ENCODE measurements at regions of chr1 and their contacts with region 1.

Region 1: GRCh38 chr1:27662707-27663393 is 9.1 kb downstream of the IFI6 start:
- DNase-seq: no peak
- H3K4me3 ChIP-seq: no peak overlapping the region
- H3K27me3 ChIP-seq: no peaks in the 10 kb centered on the region
- CTCF ChIP-seq: peak; percentile 86

Region 2: GRCh38 chr1:27365372-27366112 is 297.3 kb before region 1 on chr1:
- CTCF ChIA-PET with region 1: interaction called, 13 read pairs
- POLR2A ChIA-PET with region 1: no interaction called
- DNase-seq: peak; percentile 65
- H3K4me3 ChIP-seq: peak overlapping the region; percentile 56
- H3K27me3 ChIP-seq: no peaks in the 10 kb centered on the region
- CTCF ChIP-seq: no peak

Region 3: GRCh38 chr1:27402349-27402754 is 260.5 kb before region 1 on chr1:
- CTCF ChIA-PET with region 1: interaction called, 10 read pairs
- POLR2A ChIA-PET with region 1: no interaction called
- DNase-seq: no peak
- H3K4me3 ChIP-seq: no peak overlapping the region
- H3K27me3 ChIP-seq: no peaks in the 10 kb centered on the region
- CTCF ChIP-seq: peak; percentile 79

Region 4: GRCh38 chr1:27436204-27437159 is 226.4 kb before region 1 on chr1:
- CTCF ChIA-PET with region 1: no interaction called
- POLR2A ChIA-PET with region 1: interaction called, 10 read pairs
- DNase-seq: peak; percentile 37
- H3K4me3 ChIP-seq: no peak overlapping the region
- H3K27me3 ChIP-seq: no peaks in the 10 kb centered on the region
- CTCF ChIP-seq: no peak

Region 5: DNA sequence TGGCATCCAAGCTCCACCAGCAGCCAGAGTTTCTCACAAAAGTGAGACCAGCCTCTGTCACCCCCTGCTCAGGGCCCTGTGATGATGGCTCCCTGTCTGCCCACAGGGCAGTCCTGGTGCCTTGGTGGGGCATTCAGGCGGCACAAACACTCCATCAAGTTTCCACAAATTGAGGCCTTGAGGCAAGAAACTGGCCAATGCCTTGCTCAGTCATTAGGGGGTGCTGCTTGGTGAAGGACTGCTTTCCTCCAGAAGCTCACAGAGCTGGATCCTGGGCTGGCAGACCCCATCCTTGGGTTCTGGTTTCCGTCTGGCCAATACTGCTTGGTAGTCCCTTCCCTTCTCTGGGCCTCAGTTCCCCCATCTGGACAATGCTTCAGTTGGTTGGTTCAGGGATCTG is 46.4 kb before region 1 on chr1:
- CTCF ChIA-PET with region 1: interaction called, 223 read pairs
- POLR2A ChIA-PET with region 1: no interaction called
- DNase-seq: no peak
- H3K4me3 ChIP-seq: no peak overlapping the region
- H3K27me3 ChIP-seq: peaks cover 2% of the 10 kb centered on the region; the same call in 1 of the 2 replicates
- CTCF ChIP-seq: no peak

Region 6: DNA sequence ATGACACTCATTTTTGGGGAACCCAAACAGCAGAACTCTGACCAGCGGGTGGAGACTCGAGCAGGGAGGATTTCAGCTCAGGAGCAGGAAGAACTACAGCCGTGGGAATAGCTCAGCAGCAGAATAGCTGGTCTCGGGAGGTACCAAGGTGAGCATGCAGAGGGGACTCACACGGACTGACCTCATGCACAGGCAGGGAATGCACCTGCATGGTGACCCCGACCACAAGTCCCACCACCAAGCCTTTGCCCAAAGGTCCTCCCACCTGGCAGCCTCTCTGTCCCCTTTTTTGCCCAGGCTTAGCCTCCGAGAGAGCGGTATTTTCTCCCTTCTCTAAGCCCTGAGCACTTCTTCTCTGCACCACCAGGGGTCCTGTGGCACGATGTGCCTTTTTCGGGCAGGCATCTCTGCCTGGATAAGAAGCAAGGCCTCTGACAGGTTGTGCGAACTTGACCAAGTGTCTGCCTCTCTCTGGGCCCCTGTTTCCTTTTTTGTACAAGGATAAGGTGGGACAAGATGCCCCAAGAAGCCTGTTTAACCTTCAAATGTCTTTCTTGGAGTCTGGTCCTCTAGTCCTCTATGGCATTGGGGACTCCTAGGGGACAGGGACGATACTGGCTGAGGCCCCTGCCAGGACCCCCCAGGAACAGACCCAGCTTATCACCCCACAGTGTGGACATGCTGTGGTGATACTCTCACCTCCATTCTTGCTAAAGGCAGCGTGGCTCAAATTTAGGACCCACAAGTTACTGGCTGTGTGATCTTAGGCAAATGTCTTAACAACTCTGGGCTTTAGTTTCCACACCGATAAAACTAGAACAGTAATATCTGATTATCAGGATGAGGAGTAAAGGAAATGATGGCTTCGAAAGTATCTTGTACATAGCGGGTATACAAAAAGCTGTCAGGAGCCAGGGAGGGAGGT is 18.9 kb before region 1 on chr1:
- CTCF ChIA-PET with region 1: interaction called, 30 read pairs
- POLR2A ChIA-PET with region 1: no interaction called
- DNase-seq: no peak
- H3K4me3 ChIP-seq: no peak overlapping the region
- H3K27me3 ChIP-seq: no peaks in the 10 kb centered on the region
- CTCF ChIP-seq: peak; percentile 91

Region 7: GRCh38 chr1:27650539-27651175 is 12.2 kb before region 1 on chr1:
- CTCF ChIA-PET with region 1: interaction called, 24 read pairs
- POLR2A ChIA-PET with region 1: no interaction called
- DNase-seq: peak; percentile 41
- H3K4me3 ChIP-seq: no peak overlapping the region
- H3K27me3 ChIP-seq: no peaks in the 10 kb centered on the region
- CTCF ChIP-seq: no peak

Region 8: DNA sequence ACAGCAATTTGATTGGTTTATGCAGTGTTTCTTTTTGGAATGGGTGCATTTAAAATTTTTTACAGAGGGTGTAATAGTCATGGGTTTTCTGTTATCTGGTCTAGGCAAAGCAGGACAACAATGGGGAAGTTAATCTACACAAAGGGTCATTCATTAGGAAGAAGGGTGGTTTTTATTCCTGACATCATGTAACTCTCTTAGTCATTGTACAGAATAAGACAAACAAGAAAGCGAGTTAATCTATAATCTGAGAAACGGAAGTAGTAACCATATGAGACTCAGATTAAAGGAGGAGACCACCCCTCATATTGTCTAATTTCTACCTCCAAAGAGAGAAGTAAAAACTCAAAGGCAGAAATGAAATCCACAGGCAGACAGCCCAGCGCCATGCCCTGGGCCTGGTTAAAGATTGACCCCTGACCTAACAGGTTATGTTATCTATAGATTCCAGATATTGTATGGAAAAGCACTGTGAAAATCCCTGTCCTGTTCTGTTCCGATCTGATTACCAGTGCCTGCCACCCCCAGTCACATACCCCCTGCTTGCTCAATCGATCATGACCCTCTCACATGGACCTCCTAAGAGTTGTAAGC is 19.6 kb after region 1 on chr1:
- CTCF ChIA-PET with region 1: no interaction called
- POLR2A ChIA-PET with region 1: no interaction called
- DNase-seq: no peak
- H3K4me3 ChIP-seq: no peak overlapping the region
- H3K27me3 ChIP-seq: peaks cover 12% of the 10 kb centered on the region
- CTCF ChIP-seq: no peak

Region 9: DNA sequence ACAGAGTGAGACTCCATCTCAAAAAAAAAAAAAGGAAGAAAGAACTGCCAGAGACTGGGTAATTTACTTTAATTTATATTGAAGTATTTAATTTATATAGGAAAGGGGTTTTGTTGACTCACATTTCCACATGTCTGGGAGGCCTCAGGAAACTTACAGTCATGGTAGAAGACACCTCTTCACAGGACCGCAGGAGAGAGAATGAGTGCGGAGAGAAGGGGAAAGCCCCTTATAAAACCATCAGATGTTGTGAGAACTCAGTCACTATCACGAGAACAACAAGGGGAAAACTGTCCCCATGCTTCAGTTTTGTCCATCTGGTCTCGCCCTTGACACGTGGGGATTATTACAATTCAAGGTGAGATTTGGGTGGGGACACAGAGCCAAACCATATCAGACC is 141.9 kb after region 1 on chr1:
- CTCF ChIA-PET with region 1: no interaction called
- POLR2A ChIA-PET with region 1: no interaction called
- DNase-seq: no peak
- H3K4me3 ChIP-seq: no peak overlapping the region
- H3K27me3 ChIP-seq: no peaks in the 10 kb centered on the region
- CTCF ChIP-seq: no peak

Measured in BJ (cell line).